Panc1 (cell line): ENCODE measurements at regions of chr4 and their contacts with region 1.

Region 1: GRCh38 chr4:167021545-167022155 is 212.6 kb downstream of the SPOCK3 start:
- DNase-seq: peak; percentile 51
- ATAC-seq: peak; percentile 80
- H3K4me3 ChIP-seq: no peak overlapping the region
- H3K27ac ChIP-seq: no peak overlapping the region
- H3K4me1 ChIP-seq: no peaks in the 10 kb centered on the region
- H3K27me3 ChIP-seq: no peaks in the 10 kb centered on the region
- CTCF ChIP-seq: peak; percentile 75

Region 2: GRCh38 chr4:167218022-167218608 is 196.5 kb after region 1 on chr4:
- CTCF ChIA-PET with region 1: no interaction called
- POLR2A ChIA-PET with region 1: no interaction called
- in situ Hi-C with region 1: no loop called
- intact Hi-C with region 1: loop called (anchors 10 kb)
- DNase-seq: peak; percentile 24
- ATAC-seq: no peak; the same call in 1 of the 2 replicates
- H3K4me3 ChIP-seq: no peak overlapping the region
- H3K27ac ChIP-seq: no peak overlapping the region
- H3K4me1 ChIP-seq: no peaks in the 10 kb centered on the region; the same call in 1 of the 2 replicates
- H3K27me3 ChIP-seq: no peaks in the 10 kb centered on the region
- CTCF ChIP-seq: no peak

Region 3: GRCh38 chr4:167290678-167291077 is 269.0 kb after region 1 on chr4:
- CTCF ChIA-PET with region 1: no interaction called
- POLR2A ChIA-PET with region 1: no interaction called
- in situ Hi-C with region 1: no loop called
- intact Hi-C with region 1: loop called (anchors 2 kb)
- DNase-seq: no peak
- ATAC-seq: no peak
- H3K4me3 ChIP-seq: no peak overlapping the region
- H3K27ac ChIP-seq: no peak overlapping the region
- H3K4me1 ChIP-seq: no peaks in the 10 kb centered on the region
- H3K27me3 ChIP-seq: no peaks in the 10 kb centered on the region
- CTCF ChIP-seq: peak; percentile 14; the same call in 1 of the 2 replicates

Region 4: GRCh38 chr4:168076989-168077725 is 1055.5 kb after region 1 on chr4:
- CTCF ChIA-PET with region 1: no interaction called
- POLR2A ChIA-PET with region 1: no interaction called
- in situ Hi-C with region 1: no loop called
- intact Hi-C with region 1: loop called (anchors 2 kb)
- DNase-seq: peak; percentile 63
- ATAC-seq: no peak
- H3K4me3 ChIP-seq: no peak overlapping the region
- H3K27ac ChIP-seq: no peak overlapping the region
- H3K4me1 ChIP-seq: no peaks in the 10 kb centered on the region
- H3K27me3 ChIP-seq: no peaks in the 10 kb centered on the region
- CTCF ChIP-seq: peak; percentile 80